Activated CD4-positive, alpha-beta T cell treated with anti-CD3 and anti-CD28 coated beads, Interleukin-2, amount 10 ng/mL, durations not matched to agents 24 days and 14 days (primary cell): ENCODE measurements at regions of chr3 and their contacts with region 1.

Region 1: DNA sequence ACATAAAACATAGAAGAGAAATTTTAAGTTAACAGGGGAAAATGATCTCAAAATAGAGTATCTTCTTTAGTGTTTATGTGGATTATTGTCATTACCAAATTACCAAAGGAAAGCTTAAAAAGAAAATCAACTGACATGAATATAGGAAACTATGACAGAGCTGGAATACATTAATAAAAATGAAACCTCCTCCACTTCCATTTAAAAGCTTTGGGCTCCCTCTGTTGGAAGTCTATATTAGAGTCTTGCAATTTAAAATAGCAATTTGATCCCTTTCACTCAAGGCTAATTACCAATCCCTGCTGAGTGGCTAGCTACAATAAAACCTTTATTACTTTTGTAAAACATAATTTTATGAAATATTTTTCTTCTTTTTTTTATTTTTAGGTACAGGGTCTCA is 61.4 kb upstream of the IMPG2 start:
- DNase-seq: no peak
- H3K4me3 Mint-ChIP-seq: no peak overlapping the region
- H3K27ac Mint-ChIP-seq: no peak overlapping the region
- H3K4me1 Mint-ChIP-seq: peaks cover 27% of the 10 kb centered on the region
- H3K27me3 Mint-ChIP-seq: no peaks in the 10 kb centered on the region

Region 2: GRCh38 chr3:100334488-100335351 is 1047.1 kb before region 1 on chr3 and contains the start of gene NIT2:
- intact Hi-C with region 1: loop called (anchors 5 kb)
- DNase-seq: peak; percentile 93
- H3K4me3 Mint-ChIP-seq: peak within 1 kb of the TSS; percentile 95
- H3K27ac Mint-ChIP-seq: peak within 1 kb of the TSS; percentile 98
- H3K4me1 Mint-ChIP-seq: peaks cover 18% of the 10 kb centered on the region
- H3K27me3 Mint-ChIP-seq: no peaks in the 10 kb centered on the region
- total RNA-seq, gene NIT2: 75.5 and 79.2 TPM in 2 replicates

Region 3: DNA sequence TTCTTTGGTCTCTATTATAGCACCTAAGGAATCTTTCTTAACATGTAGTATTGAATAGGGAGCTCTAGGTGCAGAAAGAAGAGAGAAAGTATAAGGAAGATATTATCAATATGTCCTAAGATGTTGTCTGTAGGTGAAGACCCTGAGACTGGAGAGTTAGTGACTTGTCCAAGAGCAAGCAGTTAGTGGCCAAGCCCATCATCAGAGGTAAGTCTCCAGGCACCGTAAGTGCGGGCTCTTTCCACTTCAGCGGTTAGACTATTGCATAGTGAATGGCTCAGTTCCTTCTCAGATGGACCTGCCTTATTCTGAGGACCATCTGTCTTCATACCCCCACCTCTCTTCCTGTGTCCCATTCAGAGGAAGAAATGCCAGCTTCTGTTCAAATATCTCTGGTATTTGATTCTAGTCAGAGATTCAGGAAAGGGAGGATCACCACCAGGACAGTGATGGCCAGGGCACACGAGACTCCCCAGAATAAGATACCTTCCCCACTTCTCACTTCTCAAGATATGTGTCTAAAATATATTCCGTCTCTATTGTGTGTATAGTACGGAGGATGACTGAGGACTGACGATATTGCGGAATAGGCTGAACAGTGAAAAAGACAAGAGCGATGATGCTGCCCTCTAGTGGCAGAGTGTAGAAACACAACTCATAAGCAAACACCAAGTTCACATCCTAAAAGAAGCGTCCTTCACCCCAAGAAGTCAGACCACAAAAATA is 791.5 kb before region 1 on chr3:
- intact Hi-C with region 1: loop called (anchors 5 kb)
- DNase-seq: peak; percentile 88
- H3K4me3 Mint-ChIP-seq: peak overlapping the region; percentile 23
- H3K27ac Mint-ChIP-seq: no peak overlapping the region
- H3K4me1 Mint-ChIP-seq: peaks cover 5% of the 10 kb centered on the region
- H3K27me3 Mint-ChIP-seq: peaks cover 16% of the 10 kb centered on the region

Region 4: GRCh38 chr3:100893590-100893989 is 488.2 kb before region 1 on chr3:
- intact Hi-C with region 1: loop called (anchors 5 kb)
- DNase-seq: no peak
- H3K4me3 Mint-ChIP-seq: no peak overlapping the region
- H3K27ac Mint-ChIP-seq: no peak overlapping the region
- H3K4me1 Mint-ChIP-seq: no peaks in the 10 kb centered on the region
- H3K27me3 Mint-ChIP-seq: peaks cover 14% of the 10 kb centered on the region

Region 5: DNA sequence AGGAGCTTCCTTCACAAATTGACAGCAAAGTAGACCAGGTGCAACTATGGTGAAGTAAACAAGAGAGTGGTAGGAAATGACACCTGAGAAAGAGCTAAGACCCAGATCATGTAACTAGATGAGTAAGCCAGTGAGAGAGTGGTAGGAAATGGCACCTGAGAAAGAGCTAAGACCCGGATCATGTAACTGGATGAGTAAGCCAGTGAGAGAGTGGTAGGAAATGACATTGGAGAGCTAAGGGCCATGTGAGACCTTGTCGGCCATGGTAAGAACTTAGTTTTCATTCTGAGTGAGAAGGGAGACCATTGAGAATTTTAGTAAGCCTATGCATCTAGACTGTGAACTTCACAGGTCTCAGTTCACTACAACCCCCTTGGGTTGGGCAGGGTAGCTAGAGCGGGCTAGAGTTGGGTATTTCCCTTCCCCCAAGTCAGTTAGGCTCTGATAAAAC is 136.6 kb after region 1 on chr3:
- intact Hi-C with region 1: loop called (anchors 2 kb)
- DNase-seq: peak; percentile 84
- H3K4me3 Mint-ChIP-seq: peak overlapping the region; percentile 46
- H3K27ac Mint-ChIP-seq: peak overlapping the region; percentile 92
- H3K4me1 Mint-ChIP-seq: peaks cover 41% of the 10 kb centered on the region
- H3K27me3 Mint-ChIP-seq: no peaks in the 10 kb centered on the region